ENCODE measurements at regions of chr12 and their contacts with region 1.

Region 1: GRCh38 chr12:128069359-128069997 is 197.5 kb upstream of the TMEM132C start:
- DNase-seq: peak; percentile 46
- H3K4me3 ChIP-seq: no peak overlapping the region
- CTCF ChIP-seq: peak; percentile 66

Region 2: GRCh38 chr12:127485528-127485927 is 584.0 kb before region 1 on chr12:
- CTCF ChIA-PET with region 1: interaction called, 10 read pairs
- POLR2A ChIA-PET with region 1: no interaction called
- DNase-seq: peak; percentile 77
- H3K4me3 ChIP-seq: no peak overlapping the region
- CTCF ChIP-seq: peak; percentile 60

Region 3: GRCh38 chr12:128052331-128052730 is 17.1 kb before region 1 on chr12:
- CTCF ChIA-PET with region 1: interaction called, 13 read pairs
- POLR2A ChIA-PET with region 1: no interaction called
- DNase-seq: peak; percentile 24
- H3K4me3 ChIP-seq: no peak overlapping the region
- CTCF ChIP-seq: no peak